T-cell (primary cell): ENCODE measurements at regions of chr4 and their contacts with region 1.

Region 1: GRCh38 chr4:26860157-26860921 is at the start of gene STIM2:
- DNase-seq: peak; percentile 90 to 100 (median 96)
- ATAC-seq: peak; percentile 64 to 77 (median 71)
- H3K4me3 ChIP-seq: peak within 1 kb of the TSS; percentile 84 to 94
- H3K4me3 Mint-ChIP-seq: peak within 1 kb of the TSS; percentile 98 to 100 (median 100)
- H3K27ac ChIP-seq: peak within 1 kb of the TSS; percentile 73
- H3K27ac Mint-ChIP-seq: peak within 1 kb of the TSS; percentile 97 to 99
- H3K4me1 ChIP-seq: peaks cover 32 to 45% of the 10 kb centered on the region in 2 experiments
- H3K4me1 Mint-ChIP-seq: peaks cover 54 to 77% (median 64%) of the 10 kb centered on the region in 3 donors
- H3K27me3 ChIP-seq: no peaks in the 10 kb centered on the region
- H3K27me3 Mint-ChIP-seq: no peaks in the 10 kb centered on the region
- total RNA-seq, gene STIM2: 67.9 to 98.7 (median 75.2) TPM

Region 2: GRCh38 chr4:26583865-26584652 is 276.3 kb before region 1 on chr4 and contains the start of gene TBC1D19:
- CTCF ChIA-PET with region 1: interaction called in 1 of 2 experiments, 6 read pairs
- POLR2A ChIA-PET with region 1: interaction called in 1 of 2 experiments, 11 read pairs
- DNase-seq: peak; percentile 73 to 91 (median 82)
- ATAC-seq: peak; percentile 88 to 95 (median 94)
- H3K4me3 ChIP-seq: peak within 1 kb of the TSS; percentile 91 to 98
- H3K4me3 Mint-ChIP-seq: peak within 1 kb of the TSS; percentile 95 to 96 (median 96)
- H3K27ac ChIP-seq: peak within 1 kb of the TSS; percentile 94
- H3K27ac Mint-ChIP-seq: peak within 1 kb of the TSS; percentile 94 to 98
- H3K4me1 ChIP-seq: peaks cover 9 to 12% of the 10 kb centered on the region in 2 experiments
- H3K4me1 Mint-ChIP-seq: peaks cover 33 to 42% (median 34%) of the 10 kb centered on the region in 3 donors
- H3K27me3 ChIP-seq: no peaks in the 10 kb centered on the region
- H3K27me3 Mint-ChIP-seq: peaks cover 0 to 7% of the 10 kb centered on the region in 2 donors
- total RNA-seq, gene TBC1D19: 6.8 to 11.6 (median 9.4) TPM

Region 3: DNA sequence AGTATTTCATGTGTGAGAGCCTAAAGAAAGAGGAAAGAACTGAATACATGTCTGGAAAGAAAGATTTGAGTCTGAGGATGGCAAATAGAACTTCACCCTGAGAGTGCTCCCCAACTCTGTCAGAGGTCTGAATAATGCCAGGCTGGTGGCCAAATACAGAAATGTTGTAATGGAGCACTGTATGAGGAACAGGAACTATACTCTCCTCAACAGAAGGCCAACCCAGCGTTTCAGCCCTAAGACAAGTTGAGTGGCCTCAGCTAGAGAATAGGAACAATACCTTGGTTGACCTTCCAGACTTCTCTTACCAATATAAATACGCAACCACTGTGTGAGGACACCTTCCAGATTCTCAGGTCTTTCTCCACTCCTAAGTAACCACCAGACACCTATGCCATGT is 94.2 kb before region 1 on chr4:
- CTCF ChIA-PET with region 1: no interaction called
- POLR2A ChIA-PET with region 1: interaction called in 1 of 2 experiments, 11 read pairs
- DNase-seq: peak in 1 of 35 experiments; percentile 7
- ATAC-seq: no peak
- H3K4me3 ChIP-seq: no peak overlapping the region
- H3K4me3 Mint-ChIP-seq: no peak overlapping the region
- H3K27ac ChIP-seq: no peak overlapping the region
- H3K27ac Mint-ChIP-seq: no peak overlapping the region
- H3K4me1 ChIP-seq: no peaks in the 10 kb centered on the region
- H3K4me1 Mint-ChIP-seq: no peaks in the 10 kb centered on the region
- H3K27me3 ChIP-seq: no peaks in the 10 kb centered on the region
- H3K27me3 Mint-ChIP-seq: no peaks in the 10 kb centered on the region

Region 4: GRCh38 chr4:26873391-26874026 is 13.2 kb after region 1 on chr4:
- CTCF ChIA-PET with region 1: interaction called in 1 of 2 experiments, 9 read pairs
- POLR2A ChIA-PET with region 1: interaction called, 4 to 60 read pairs
- DNase-seq: peak; percentile 15 to 87 (median 68)
- ATAC-seq: peak; percentile 81 to 92 (median 89)
- H3K4me3 ChIP-seq: no peak overlapping the region
- H3K4me3 Mint-ChIP-seq: peak overlapping the region; percentile 28 to 74 (median 42)
- H3K27ac ChIP-seq: peak overlapping the region; percentile 88
- H3K27ac Mint-ChIP-seq: peak overlapping the region; percentile 86 to 94
- H3K4me1 ChIP-seq: peaks cover 29 to 32% of the 10 kb centered on the region in 2 experiments
- H3K4me1 Mint-ChIP-seq: peaks cover 84 to 89% (median 89%) of the 10 kb centered on the region in 3 donors
- H3K27me3 ChIP-seq: no peaks in the 10 kb centered on the region
- H3K27me3 Mint-ChIP-seq: no peaks in the 10 kb centered on the region